Colonic mucosa (tissue), 4 donors: ENCODE measurements at regions of chr11 and their contacts with region 1.

Region 1: DNA sequence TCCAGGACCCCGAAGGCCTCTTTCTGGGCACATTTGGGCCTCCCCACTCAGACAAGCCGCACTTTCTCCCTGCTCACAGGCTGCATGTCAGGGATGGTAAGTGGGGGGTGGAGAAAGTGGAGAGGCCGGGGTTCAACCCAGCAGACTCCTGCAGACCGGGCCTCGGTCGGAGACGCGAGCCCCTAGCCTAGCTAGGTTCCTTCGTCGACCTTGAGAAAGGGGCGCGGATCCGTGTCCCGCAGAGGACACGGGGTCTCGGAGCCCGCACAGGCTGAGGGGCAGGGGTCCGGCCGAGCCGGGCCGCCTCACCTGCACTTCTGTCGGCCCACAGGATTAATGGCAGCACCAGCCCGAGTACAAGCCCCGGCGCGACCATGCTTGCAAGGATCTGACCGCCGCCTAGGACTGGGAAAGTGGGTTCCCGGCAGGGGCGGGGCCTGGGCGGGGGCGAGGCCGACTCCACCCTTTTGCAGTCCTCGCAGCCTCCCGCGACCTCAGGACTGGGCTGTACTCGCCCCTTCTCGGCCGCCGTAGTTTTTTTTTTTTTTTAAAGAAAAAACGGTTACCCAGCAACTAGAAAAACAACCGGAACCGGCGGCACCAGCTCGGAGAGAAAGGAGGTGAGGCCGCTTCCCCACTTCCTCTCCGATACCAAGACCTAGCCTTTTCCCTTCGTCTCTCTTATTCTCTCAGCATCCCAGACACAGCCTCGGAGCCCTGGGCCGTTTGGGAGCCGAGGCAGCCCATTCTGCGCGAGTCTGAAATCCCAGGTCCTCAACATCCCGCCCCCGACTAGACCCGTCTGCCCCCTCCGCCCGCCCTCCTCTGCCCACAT is at the starts of genes SIAE and SPA17:
- DNase-seq: peak; percentile 96
- H3K4me3 ChIP-seq: peak within 1 kb of the TSS; percentile 77
- H3K27ac ChIP-seq: peak within 1 kb of the TSS; percentile 91
- H3K4me1 ChIP-seq: no peaks in the 10 kb centered on the region
- H3K27me3 ChIP-seq: no peaks in the 10 kb centered on the region
- CTCF ChIP-seq: no peak
- total RNA-seq, gene SIAE: 128 to 236 TPM
- total RNA-seq, gene SPA17: 8.4 to 10.7 TPM

Region 2: DNA sequence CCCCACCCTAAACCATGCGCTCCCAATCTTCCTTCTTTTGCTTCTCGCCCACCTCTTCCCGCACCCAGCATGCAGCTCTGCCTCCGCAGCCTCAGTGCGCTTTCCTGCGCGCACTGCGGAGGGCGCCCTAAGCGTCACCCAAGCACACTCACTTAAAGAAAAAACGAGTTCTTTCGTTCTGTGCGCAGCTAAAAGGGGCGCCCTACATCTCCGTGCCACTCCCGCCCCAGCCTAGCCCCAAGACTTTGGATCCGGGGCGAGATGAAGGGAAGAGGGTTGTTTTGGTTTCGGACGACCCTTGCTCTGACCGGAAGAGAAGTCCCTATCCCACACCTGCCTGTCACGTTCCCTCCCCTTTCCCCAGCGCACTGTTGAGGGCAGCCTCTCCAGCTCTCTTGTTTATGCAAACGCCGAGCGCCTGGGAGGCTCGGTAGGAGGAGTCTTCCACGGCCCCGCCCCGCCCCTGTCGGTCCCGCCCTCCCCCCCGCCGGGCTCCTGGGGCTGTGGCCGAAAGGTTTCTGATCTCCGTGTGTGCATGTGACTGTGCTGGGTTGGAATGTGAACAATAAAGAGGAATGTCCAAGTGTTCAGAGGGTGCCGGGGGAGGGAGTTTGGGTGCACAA is 73.2 kb after region 1 on chr11:
- intact Hi-C with region 1: loop called (anchors 5 kb)
- DNase-seq: peak; percentile 95
- H3K4me3 ChIP-seq: peak overlapping the region; percentile 34
- H3K27ac ChIP-seq: peak overlapping the region; percentile 67
- H3K4me1 ChIP-seq: peaks cover 4% of the 10 kb centered on the region
- H3K27me3 ChIP-seq: peaks cover 4% of the 10 kb centered on the region
- CTCF ChIP-seq: peak; percentile 32

Region 3: DNA sequence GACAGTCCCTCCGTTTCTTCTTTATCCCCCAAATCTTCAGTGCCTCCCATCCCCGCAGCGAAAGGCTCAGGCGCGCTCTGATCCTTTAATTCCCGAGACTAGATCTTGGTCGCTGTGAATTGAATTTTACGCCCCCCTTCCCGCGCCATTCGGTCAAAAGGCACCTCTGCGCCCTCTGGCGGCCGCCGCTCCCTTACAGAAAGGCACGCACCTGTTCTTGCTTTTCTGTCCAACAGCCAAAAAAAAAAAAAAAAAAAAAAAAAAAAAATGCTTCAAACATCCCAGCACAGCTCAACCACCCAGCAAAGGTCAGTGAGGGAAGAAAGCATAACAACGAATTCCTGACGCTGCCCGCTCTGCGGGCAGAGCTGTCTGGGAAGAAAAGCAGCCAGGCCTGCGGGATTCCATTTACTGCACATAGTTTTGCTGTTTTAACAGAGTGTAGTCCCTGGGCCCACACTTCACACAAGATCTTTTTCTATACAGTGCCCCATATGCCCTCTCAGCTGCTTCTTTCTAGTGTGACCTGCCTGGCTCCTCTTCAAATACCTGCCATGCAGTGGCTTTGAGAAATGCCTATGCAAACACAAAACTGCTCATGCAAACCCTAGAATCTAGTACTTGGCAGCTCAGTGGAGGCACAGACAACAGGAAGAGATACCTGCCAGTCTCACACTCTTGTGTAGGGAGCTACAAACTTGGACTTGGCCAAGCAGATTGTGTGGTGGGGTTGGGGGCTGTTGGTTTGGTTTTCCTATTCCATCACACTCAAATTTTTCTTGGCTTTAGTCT is 89.8 kb after region 1 on chr11:
- intact Hi-C with region 1: loop called (anchors 2 kb)
- DNase-seq: peak; percentile 94
- H3K4me3 ChIP-seq: peak overlapping the region; percentile 59
- H3K27ac ChIP-seq: peak overlapping the region; percentile 77
- H3K4me1 ChIP-seq: peaks cover 7% of the 10 kb centered on the region
- H3K27me3 ChIP-seq: peaks cover 19% of the 10 kb centered on the region
- CTCF ChIP-seq: peak; percentile 80

Region 4: GRCh38 chr11:124793466-124794278 is 120.1 kb after region 1 on chr11:
- intact Hi-C with region 1: loop called (anchors 5 kb)
- DNase-seq: peak; percentile 54
- H3K4me3 ChIP-seq: no peak overlapping the region
- H3K27ac ChIP-seq: no peak overlapping the region
- H3K4me1 ChIP-seq: peaks cover 4% of the 10 kb centered on the region
- H3K27me3 ChIP-seq: no peaks in the 10 kb centered on the region
- CTCF ChIP-seq: peak; percentile 74

Region 5: DNA sequence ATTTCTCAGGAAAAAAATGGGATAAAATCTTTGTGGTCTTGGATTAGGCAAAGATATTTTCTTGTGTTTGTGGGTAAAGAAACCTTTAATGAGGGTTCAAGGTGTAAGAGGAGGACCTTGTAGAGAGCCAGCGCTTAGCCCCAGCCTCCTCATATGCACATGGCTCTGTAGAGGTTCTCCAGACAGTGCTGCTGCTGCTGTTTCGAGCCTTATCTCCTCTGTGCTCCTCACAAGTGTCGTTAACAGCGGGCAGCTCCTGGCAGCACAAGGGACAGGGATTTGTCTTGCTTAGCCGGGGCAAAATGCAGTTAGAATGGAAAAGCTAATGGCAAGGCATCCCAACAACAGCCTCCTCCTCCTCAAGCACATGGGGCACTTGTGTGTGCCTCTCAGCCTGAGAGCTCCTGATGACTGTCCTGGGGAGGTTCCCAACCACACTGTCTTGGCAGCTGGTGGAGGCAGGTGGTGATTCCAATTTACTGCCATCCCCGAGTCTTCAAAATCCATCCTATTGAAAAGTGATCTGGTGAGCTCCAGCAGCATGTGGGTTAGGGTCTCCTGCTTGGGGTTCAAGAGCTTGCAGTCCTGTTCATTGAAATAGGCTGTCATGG is 134.2 kb after region 1 on chr11:
- intact Hi-C with region 1: no loop called
- DNase-seq: no peak
- H3K4me3 ChIP-seq: no peak overlapping the region
- H3K27ac ChIP-seq: no peak overlapping the region
- H3K4me1 ChIP-seq: no peaks in the 10 kb centered on the region
- H3K27me3 ChIP-seq: no peaks in the 10 kb centered on the region
- CTCF ChIP-seq: no peak

Region 6: GRCh38 chr11:124837491-124837856 is 163.9 kb after region 1 on chr11:
- intact Hi-C with region 1: loop called (anchors 2 kb)
- DNase-seq: peak; percentile 30
- H3K4me3 ChIP-seq: no peak overlapping the region
- H3K27ac ChIP-seq: no peak overlapping the region
- H3K4me1 ChIP-seq: peaks cover 11% of the 10 kb centered on the region
- H3K27me3 ChIP-seq: peaks cover 49% of the 10 kb centered on the region
- CTCF ChIP-seq: no peak